GM12878 (cell line): ENCODE measurements at regions of chr4 and their contacts with region 1.

Region 1: DNA sequence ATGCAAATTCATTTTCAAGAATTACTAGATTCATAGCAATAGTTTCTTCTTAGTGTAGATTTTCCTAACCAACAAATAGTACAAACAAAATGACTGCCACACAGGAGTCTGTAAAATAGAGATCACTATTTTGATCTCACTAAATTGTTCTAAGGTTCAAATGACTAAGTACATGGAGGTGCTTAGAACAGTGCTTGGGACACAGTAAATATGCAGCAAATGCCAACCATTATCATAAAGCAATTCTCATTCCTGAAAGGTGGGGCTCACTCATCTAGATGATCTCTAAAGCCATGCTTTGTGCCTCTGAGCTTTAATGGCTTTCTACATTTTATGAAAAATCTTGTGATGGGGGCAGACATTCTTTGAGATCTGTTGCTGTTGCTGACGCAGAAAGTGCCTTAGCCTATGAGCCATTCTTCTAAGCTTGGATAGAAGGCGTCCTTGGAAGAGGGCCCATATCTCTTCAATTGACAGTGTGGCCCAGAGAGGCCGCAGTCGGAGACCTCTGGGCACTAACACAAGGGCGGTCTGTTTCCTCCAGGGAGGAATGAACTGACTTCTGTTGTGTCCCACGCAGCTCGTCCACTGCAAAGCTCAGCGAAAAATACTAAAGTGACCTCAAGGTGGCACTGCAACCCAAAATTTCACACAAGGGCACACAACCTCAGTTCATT is 23.5 kb downstream of the TLR10 start:
- DNase-seq: peak; percentile 77
- ATAC-seq: peak; percentile 51
- H3K4me3 ChIP-seq: no peak overlapping the region
- H3K27ac ChIP-seq: peak overlapping the region; percentile 95; the same call in 1 of the 2 replicates
- H3K4me1 ChIP-seq: peaks cover 42% of the 10 kb centered on the region
- H3K27me3 ChIP-seq: no peaks in the 10 kb centered on the region
- CTCF ChIP-seq: peak; percentile 46 to 75 (median 74)
- EP300 ChIP-seq: no peak
- POLR2A ChIP-seq: no peak
- RAD21 ChIP-seq: peak; percentile 93

Region 2: DNA sequence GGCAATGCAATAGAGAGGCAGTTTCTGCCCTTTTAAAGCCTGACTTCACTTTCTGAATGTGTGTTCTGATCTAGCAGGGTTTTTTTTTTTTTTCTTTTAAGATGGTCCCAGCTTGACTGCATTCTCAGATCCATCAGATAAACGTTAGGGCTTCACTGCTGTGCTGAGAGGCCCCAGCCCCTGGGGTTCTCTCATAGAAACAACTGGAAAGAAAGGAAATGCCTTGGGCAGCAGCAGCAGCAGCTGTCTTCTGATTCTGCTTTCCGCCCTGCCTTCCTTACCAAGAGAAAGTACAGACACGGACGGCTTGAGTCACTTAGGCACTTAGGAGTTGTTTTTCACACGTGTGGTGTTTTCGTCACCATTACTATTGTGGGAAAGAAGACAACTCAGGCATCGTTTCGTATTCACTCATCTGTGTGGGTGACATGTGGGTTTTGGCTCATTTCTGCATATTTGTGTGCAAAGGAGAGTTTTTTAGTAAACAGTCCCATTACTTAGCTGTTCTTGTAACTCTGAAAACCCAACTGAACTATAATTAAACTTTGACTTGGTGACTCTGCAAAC is 627.1 kb before region 1 on chr4:
- CTCF ChIA-PET with region 1: interaction called, 4 read pairs
- POLR2A ChIA-PET with region 1: no interaction called
- RAD21 ChIA-PET with region 1: interaction called, 11 read pairs
- SMC1A ChIA-PET with region 1: no interaction called
- in situ Hi-C with region 1: no loop called
- intact Hi-C with region 1: no loop called
- DNase-seq: peak; percentile 100
- ATAC-seq: peak; percentile 63
- H3K4me3 ChIP-seq: 0 out of 2 replicates have a peak overlapping the region, but pooled peaks have one; percentile 10
- H3K27ac ChIP-seq: peak overlapping the region; percentile 96
- H3K4me1 ChIP-seq: peaks cover 68% of the 10 kb centered on the region
- H3K27me3 ChIP-seq: no peaks in the 10 kb centered on the region
- CTCF ChIP-seq: no peak
- EP300 ChIP-seq: peak; percentile 100
- POLR2A ChIP-seq: peak; percentile 74
- RAD21 ChIP-seq: peak; percentile 14; the same call in 1 of the 2 replicates

Region 3: DNA sequence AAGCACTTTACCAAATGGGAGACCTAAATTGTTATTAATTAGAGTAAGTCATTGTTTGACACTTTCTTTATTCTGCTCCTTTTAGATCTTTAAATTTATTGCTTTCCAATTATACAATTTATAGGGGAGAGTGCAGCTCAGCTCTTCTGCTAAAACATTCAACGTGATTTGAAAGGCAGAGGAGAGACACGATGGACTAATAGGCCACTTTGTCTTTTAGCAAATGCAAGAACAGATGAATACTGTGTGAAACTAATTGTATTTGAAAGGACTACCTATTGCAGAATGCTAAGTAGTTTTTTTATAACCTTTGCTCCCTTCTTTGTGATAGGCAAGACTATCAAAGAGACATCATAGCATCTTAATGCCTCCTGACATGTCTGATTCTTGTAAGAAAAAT is 415.6 kb before region 1 on chr4:
- CTCF ChIA-PET with region 1: no interaction called
- POLR2A ChIA-PET with region 1: no interaction called
- RAD21 ChIA-PET with region 1: no interaction called
- SMC1A ChIA-PET with region 1: no interaction called
- in situ Hi-C with region 1: no loop called
- intact Hi-C with region 1: no loop called
- DNase-seq: no peak
- ATAC-seq: no peak
- H3K4me3 ChIP-seq: no peak overlapping the region
- H3K27ac ChIP-seq: no peak overlapping the region
- H3K4me1 ChIP-seq: no peaks in the 10 kb centered on the region
- H3K27me3 ChIP-seq: no peaks in the 10 kb centered on the region
- CTCF ChIP-seq: no peak
- EP300 ChIP-seq: no peak
- POLR2A ChIP-seq: no peak
- RAD21 ChIP-seq: no peak

Region 4: GRCh38 chr4:38547052-38547451 is 212.2 kb before region 1 on chr4:
- CTCF ChIA-PET with region 1: no interaction called
- POLR2A ChIA-PET with region 1: no interaction called
- RAD21 ChIA-PET with region 1: no interaction called
- SMC1A ChIA-PET with region 1: no interaction called
- in situ Hi-C with region 1: no loop called
- intact Hi-C with region 1: no loop called
- DNase-seq: no peak
- ATAC-seq: no peak
- H3K4me3 ChIP-seq: no peak overlapping the region
- H3K27ac ChIP-seq: no peak overlapping the region
- H3K4me1 ChIP-seq: no peaks in the 10 kb centered on the region
- H3K27me3 ChIP-seq: no peaks in the 10 kb centered on the region
- CTCF ChIP-seq: no peak
- EP300 ChIP-seq: no peak
- POLR2A ChIP-seq: no peak
- RAD21 ChIP-seq: no peak

Region 5: GRCh38 chr4:38730830-38731646 is 28.2 kb before region 1 on chr4:
- CTCF ChIA-PET with region 1: interaction called, 10 read pairs
- POLR2A ChIA-PET with region 1: interaction called, 3 read pairs
- RAD21 ChIA-PET with region 1: interaction called, 5 read pairs
- SMC1A ChIA-PET with region 1: interaction called, 11 read pairs
- in situ Hi-C with region 1: no loop called
- intact Hi-C with region 1: no loop called
- DNase-seq: peak; percentile 87
- ATAC-seq: peak; percentile 97
- H3K4me3 ChIP-seq: no peak overlapping the region
- H3K27ac ChIP-seq: peak overlapping the region; percentile 57
- H3K4me1 ChIP-seq: peaks cover 16% of the 10 kb centered on the region
- H3K27me3 ChIP-seq: no peaks in the 10 kb centered on the region; a peak in 1 of 4 replicates
- CTCF ChIP-seq: peak; percentile 69 to 96 (median 89)
- EP300 ChIP-seq: peak; percentile 75 to 91; a peak in 3 of 4 replicates
- POLR2A ChIP-seq: no peak
- RAD21 ChIP-seq: peak; percentile 97

Region 6: DNA sequence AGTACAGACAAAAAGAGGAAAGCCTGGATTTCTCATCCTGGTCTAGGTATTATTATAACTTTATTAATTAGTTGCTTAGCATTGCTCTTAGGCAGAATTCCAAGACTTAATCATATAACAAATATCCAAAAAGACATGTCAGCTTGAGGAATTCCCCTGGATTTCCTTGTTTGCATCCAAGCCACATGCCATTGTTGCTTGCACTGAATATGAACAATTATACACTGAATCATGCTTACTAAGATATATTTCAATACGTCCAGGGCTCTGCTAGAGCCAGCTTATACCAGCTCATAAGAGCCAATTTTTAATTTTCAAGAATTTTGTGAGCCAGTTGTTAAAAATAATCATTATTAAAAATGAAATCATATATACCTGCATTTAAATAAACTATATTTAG is 29.1 kb after region 1 on chr4:
- CTCF ChIA-PET with region 1: interaction called, 449 read pairs
- POLR2A ChIA-PET with region 1: interaction called, 196 read pairs
- RAD21 ChIA-PET with region 1: interaction called, 437 read pairs
- SMC1A ChIA-PET with region 1: interaction called, 468 read pairs
- in situ Hi-C with region 1: no loop called
- intact Hi-C with region 1: no loop called
- DNase-seq: no peak
- ATAC-seq: no peak
- H3K4me3 ChIP-seq: no peak overlapping the region
- H3K27ac ChIP-seq: no peak overlapping the region
- H3K4me1 ChIP-seq: peaks cover 22% of the 10 kb centered on the region
- H3K27me3 ChIP-seq: no peaks in the 10 kb centered on the region
- CTCF ChIP-seq: no peak
- EP300 ChIP-seq: no peak
- POLR2A ChIP-seq: no peak
- RAD21 ChIP-seq: no peak

Region 7: GRCh38 chr4:38867478-38868058 is 108.3 kb after region 1 on chr4 and contains the start of gene FAM114A1:
- CTCF ChIA-PET with region 1: interaction called, 172 read pairs
- POLR2A ChIA-PET with region 1: interaction called, 3 read pairs
- RAD21 ChIA-PET with region 1: interaction called, 18 read pairs
- SMC1A ChIA-PET with region 1: interaction called, 12 read pairs
- in situ Hi-C with region 1: no loop called
- intact Hi-C with region 1: no loop called
- DNase-seq: no peak
- ATAC-seq: peak; percentile 99
- H3K4me3 ChIP-seq: peak within 1 kb of the TSS; percentile 82
- H3K27ac ChIP-seq: no peak within 1 kb of the TSS; the same call in 1 of the 2 replicates
- H3K4me1 ChIP-seq: peaks cover 7% of the 10 kb centered on the region
- H3K27me3 ChIP-seq: no peaks in the 10 kb centered on the region
- CTCF ChIP-seq: no peak
- EP300 ChIP-seq: no peak
- POLR2A ChIP-seq: peak; percentile 80
- RAD21 ChIP-seq: no peak
- polyA plus RNA-seq, gene FAM114A1: 1.3 to 1.9 TPM

Region 8: GRCh38 chr4:38902695-38903094 is 143.4 kb after region 1 on chr4:
- CTCF ChIA-PET with region 1: interaction called, 84 read pairs
- POLR2A ChIA-PET with region 1: interaction called, 3 read pairs
- RAD21 ChIA-PET with region 1: interaction called, 71 read pairs
- SMC1A ChIA-PET with region 1: interaction called, 125 read pairs
- in situ Hi-C with region 1: no loop called
- intact Hi-C with region 1: no loop called
- DNase-seq: no peak
- ATAC-seq: peak; percentile 95
- H3K4me3 ChIP-seq: no peak overlapping the region
- H3K27ac ChIP-seq: no peak overlapping the region
- H3K4me1 ChIP-seq: no peaks in the 10 kb centered on the region
- H3K27me3 ChIP-seq: no peaks in the 10 kb centered on the region
- CTCF ChIP-seq: peak in 2 of 3 experiments; percentile 23 to 61; a peak in 3 of 6 replicates
- EP300 ChIP-seq: no peak
- POLR2A ChIP-seq: no peak
- RAD21 ChIP-seq: peak; percentile 79

Region 9: GRCh38 chr4:39134683-39135319 is 375.6 kb after region 1 on chr4:
- CTCF ChIA-PET with region 1: interaction called, 85 read pairs
- POLR2A ChIA-PET with region 1: interaction called, 4 read pairs
- RAD21 ChIA-PET with region 1: interaction called, 76 read pairs
- SMC1A ChIA-PET with region 1: interaction called, 73 read pairs
- in situ Hi-C with region 1: loop called (anchors 5 kb)
- intact Hi-C with region 1: loop called (anchors 1 kb)
- DNase-seq: no peak
- ATAC-seq: peak; percentile 70
- H3K4me3 ChIP-seq: no peak overlapping the region
- H3K27ac ChIP-seq: peak overlapping the region; percentile 27; the same call in 1 of the 2 replicates
- H3K4me1 ChIP-seq: peaks cover 6% of the 10 kb centered on the region
- H3K27me3 ChIP-seq: no peaks in the 10 kb centered on the region
- CTCF ChIP-seq: no peak
- EP300 ChIP-seq: no peak
- POLR2A ChIP-seq: no peak
- RAD21 ChIP-seq: no peak